GM12878 (cell line): ENCODE measurements at regions of chr2 and their contacts with region 1.

Region 1: DNA sequence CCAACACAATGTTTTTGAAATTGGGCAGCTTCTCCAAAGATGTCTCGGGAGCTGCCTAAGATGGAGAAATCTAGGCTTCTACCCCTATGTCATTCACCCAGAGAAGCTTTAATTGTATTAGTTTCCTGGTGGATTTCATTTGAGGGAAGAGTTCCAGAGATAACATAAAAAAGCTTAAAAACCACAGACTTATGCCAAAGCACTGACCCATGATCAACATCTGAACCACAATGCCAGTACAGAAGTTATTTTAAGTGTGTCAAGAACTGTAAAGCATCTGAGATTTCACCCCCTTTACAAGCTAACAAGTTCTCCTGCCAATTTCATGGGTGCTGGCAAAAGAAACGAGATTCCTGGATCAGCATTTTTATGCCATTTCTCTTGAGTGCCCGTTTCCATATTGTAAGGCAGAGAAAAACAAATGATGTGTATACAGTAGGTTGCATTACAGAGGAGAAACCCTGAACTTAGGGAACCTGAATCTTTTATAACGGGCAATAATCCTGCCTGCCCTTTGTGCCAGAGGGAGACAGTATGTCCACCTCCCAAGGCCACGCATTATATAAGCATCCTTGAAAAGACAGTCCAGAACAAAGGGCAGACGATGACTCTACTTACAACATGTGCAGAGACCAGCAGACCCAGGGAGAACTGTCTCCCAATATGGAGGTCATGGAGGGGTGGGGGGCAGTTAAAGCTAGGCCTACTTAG is 44.1 kb downstream of the MREG start:
- DNase-seq: no peak
- ATAC-seq: peak; percentile 27; the same call in 1 of the 3 replicates
- H3K4me3 ChIP-seq: no peak overlapping the region
- H3K27ac ChIP-seq: peak overlapping the region; percentile 20; the same call in 1 of the 2 replicates
- H3K4me1 ChIP-seq: peaks cover 5% of the 10 kb centered on the region; the same call in 1 of the 2 replicates
- H3K27me3 ChIP-seq: no peaks in the 10 kb centered on the region
- CTCF ChIP-seq: no peak
- EP300 ChIP-seq: no peak
- POLR2A ChIP-seq: no peak
- RAD21 ChIP-seq: no peak

Region 2: DNA sequence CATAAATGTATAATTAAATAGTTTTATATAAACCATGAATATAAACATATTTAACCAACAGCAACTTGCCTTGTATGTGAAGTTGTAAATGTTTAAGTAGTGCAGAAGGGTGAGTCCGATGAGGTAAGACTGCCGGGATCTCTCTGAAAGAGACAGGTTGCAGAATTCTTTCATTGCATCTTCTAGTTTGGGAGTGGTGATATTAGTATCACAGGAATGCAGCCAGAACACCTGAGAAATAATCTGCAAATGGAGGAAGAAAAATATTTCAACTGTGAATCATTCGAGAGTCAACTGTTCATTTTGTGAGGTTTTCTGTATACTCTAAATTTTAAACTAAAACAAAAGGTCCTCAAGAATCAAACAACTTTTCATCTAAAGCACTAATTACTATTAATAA is 953.9 kb before region 1 on chr2:
- CTCF ChIA-PET with region 1: no interaction called
- POLR2A ChIA-PET with region 1: no interaction called
- RAD21 ChIA-PET with region 1: no interaction called
- SMC1A ChIA-PET with region 1: no interaction called
- in situ Hi-C with region 1: no loop called
- intact Hi-C with region 1: no loop called
- DNase-seq: no peak
- ATAC-seq: no peak
- H3K4me3 ChIP-seq: no peak overlapping the region
- H3K27ac ChIP-seq: no peak overlapping the region
- H3K4me1 ChIP-seq: no peaks in the 10 kb centered on the region; the same call in none of the 2 replicates
- H3K27me3 ChIP-seq: no peaks in the 10 kb centered on the region
- CTCF ChIP-seq: no peak
- EP300 ChIP-seq: no peak
- POLR2A ChIP-seq: no peak
- RAD21 ChIP-seq: no peak

Region 3: DNA sequence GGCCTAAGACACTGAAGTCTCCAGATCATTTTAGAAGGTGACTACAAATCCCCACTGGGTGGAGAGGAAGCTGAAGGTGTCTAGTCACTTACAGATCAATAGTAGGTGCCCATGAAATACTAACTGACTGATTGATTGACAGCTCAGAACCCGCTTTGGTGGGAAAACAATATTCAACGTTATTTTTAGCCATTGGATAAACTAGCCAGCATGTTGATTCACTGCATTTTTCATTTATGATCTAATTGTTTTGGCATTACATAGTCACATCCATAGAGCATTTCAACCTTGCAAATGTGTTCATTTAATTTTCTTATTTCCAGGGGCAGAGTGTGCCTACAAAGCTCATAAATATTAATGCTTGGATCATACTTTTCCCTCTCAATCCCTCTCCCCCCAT is 118.2 kb before region 1 on chr2:
- CTCF ChIA-PET with region 1: no interaction called
- POLR2A ChIA-PET with region 1: no interaction called
- RAD21 ChIA-PET with region 1: no interaction called
- SMC1A ChIA-PET with region 1: no interaction called
- in situ Hi-C with region 1: no loop called
- intact Hi-C with region 1: no loop called
- DNase-seq: no peak
- ATAC-seq: no peak
- H3K4me3 ChIP-seq: no peak overlapping the region
- H3K27ac ChIP-seq: no peak overlapping the region
- H3K4me1 ChIP-seq: peaks cover 10% of the 10 kb centered on the region; the same call in 1 of the 2 replicates
- H3K27me3 ChIP-seq: no peaks in the 10 kb centered on the region
- CTCF ChIP-seq: no peak
- EP300 ChIP-seq: no peak
- POLR2A ChIP-seq: no peak
- RAD21 ChIP-seq: no peak

Region 4: GRCh38 chr2:215994901-215995300 is 25.6 kb after region 1 on chr2:
- CTCF ChIA-PET with region 1: no interaction called
- POLR2A ChIA-PET with region 1: no interaction called
- RAD21 ChIA-PET with region 1: no interaction called
- SMC1A ChIA-PET with region 1: no interaction called
- in situ Hi-C with region 1: no loop called
- intact Hi-C with region 1: no loop called
- DNase-seq: no peak
- ATAC-seq: no peak
- H3K4me3 ChIP-seq: no peak overlapping the region
- H3K27ac ChIP-seq: no peak overlapping the region
- H3K4me1 ChIP-seq: no peaks in the 10 kb centered on the region
- H3K27me3 ChIP-seq: no peaks in the 10 kb centered on the region
- CTCF ChIP-seq: no peak
- EP300 ChIP-seq: no peak
- POLR2A ChIP-seq: no peak
- RAD21 ChIP-seq: no peak

Region 5: GRCh38 chr2:216023055-216023648 is 53.9 kb after region 1 on chr2:
- CTCF ChIA-PET with region 1: interaction called, 4 read pairs
- POLR2A ChIA-PET with region 1: no interaction called
- RAD21 ChIA-PET with region 1: interaction called, 4 read pairs
- SMC1A ChIA-PET with region 1: interaction called, 11 read pairs
- in situ Hi-C with region 1: no loop called
- intact Hi-C with region 1: no loop called
- DNase-seq: no peak
- ATAC-seq: peak; percentile 97
- H3K4me3 ChIP-seq: no peak overlapping the region
- H3K27ac ChIP-seq: no peak overlapping the region
- H3K4me1 ChIP-seq: no peaks in the 10 kb centered on the region
- H3K27me3 ChIP-seq: no peaks in the 10 kb centered on the region
- CTCF ChIP-seq: peak; percentile 70 to 73 (median 71)
- EP300 ChIP-seq: no peak
- POLR2A ChIP-seq: no peak
- RAD21 ChIP-seq: peak; percentile 89